ENCODE measurements at regions of chr9 and their contacts with region 1.

Region 1: GRCh38 chr9:97440160-97440559 is 28.3 kb downstream of the TDRD7 start:
- DNase-seq: peak in 1 of 2 experiments; percentile 12
- H3K4me3 ChIP-seq: no peak overlapping the region
- H3K4me3 Mint-ChIP-seq: no peak overlapping the region
- H3K27ac Mint-ChIP-seq: no peak overlapping the region
- H3K4me1 ChIP-seq: peaks cover 20% of the 10 kb centered on the region
- H3K4me1 Mint-ChIP-seq: peaks cover 14% of the 10 kb centered on the region
- H3K27me3 ChIP-seq: no peaks in the 10 kb centered on the region
- H3K27me3 Mint-ChIP-seq: no peaks in the 10 kb centered on the region
- CTCF ChIP-seq: no peak

Region 2: GRCh38 chr9:97406620-97407177 is 33.5 kb before region 1 on chr9:
- CTCF ChIA-PET with region 1: no interaction called
- POLR2A ChIA-PET with region 1: no interaction called
- intact Hi-C with region 1: loop called (anchors 1 kb)
- DNase-seq: peak in 1 of 2 experiments; percentile 47
- H3K4me3 ChIP-seq: no peak overlapping the region
- H3K4me3 Mint-ChIP-seq: peak overlapping the region; percentile 11
- H3K27ac Mint-ChIP-seq: peak overlapping the region; percentile 82
- H3K4me1 ChIP-seq: peaks cover 35% of the 10 kb centered on the region
- H3K4me1 Mint-ChIP-seq: peaks cover 36% of the 10 kb centered on the region
- H3K27me3 ChIP-seq: no peaks in the 10 kb centered on the region
- H3K27me3 Mint-ChIP-seq: no peaks in the 10 kb centered on the region
- CTCF ChIP-seq: no peak

Region 3: GRCh38 chr9:97419309-97419867 is 20.8 kb before region 1 on chr9:
- CTCF ChIA-PET with region 1: no interaction called
- POLR2A ChIA-PET with region 1: no interaction called
- intact Hi-C with region 1: no loop called
- DNase-seq: no peak
- H3K4me3 ChIP-seq: no peak overlapping the region
- H3K4me3 Mint-ChIP-seq: no peak overlapping the region
- H3K27ac Mint-ChIP-seq: no peak overlapping the region
- H3K4me1 ChIP-seq: peaks cover 25% of the 10 kb centered on the region
- H3K4me1 Mint-ChIP-seq: peaks cover 38% of the 10 kb centered on the region
- H3K27me3 ChIP-seq: no peaks in the 10 kb centered on the region
- H3K27me3 Mint-ChIP-seq: no peaks in the 10 kb centered on the region
- CTCF ChIP-seq: no peak